ENCODE measurements at regions of chr15 and their contacts with region 1.

Region 1: DNA sequence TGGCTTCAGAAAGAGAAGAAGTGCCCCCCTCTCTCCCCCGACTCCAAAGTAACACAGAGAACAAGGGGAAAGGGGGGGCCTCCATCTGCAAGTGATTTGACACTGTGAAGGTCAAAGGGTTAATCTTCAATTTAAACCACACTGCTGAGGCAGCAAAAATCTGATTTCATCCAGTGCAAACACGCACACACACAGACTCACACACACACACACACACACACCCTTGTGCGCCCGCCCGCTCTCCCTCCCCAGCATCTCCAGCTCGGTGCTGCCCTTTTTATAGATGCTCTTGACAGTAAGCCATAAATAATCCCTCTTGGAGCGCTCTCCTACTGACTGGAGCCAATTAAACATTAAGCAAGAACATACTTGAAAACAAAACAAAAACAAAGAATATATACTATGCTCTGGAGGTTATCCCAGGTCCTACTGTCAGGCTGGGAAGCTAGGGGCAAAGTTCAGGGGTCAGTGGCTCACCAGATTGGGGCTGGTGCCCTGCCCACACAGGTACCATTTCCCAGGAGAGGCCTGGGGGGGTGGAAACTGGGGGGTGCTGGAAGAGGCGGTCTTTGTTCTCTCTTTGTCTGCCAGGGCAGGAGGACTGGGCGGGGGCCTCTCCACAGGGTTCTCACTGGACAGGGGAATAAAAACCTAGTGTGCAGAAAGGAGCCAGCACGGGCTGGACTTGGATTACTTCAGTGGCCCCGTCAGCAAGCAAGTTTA is 16.3 kb downstream of the BMF start:
- DNase-seq: peak; percentile 82 to 88
- H3K4me3 ChIP-seq: no peak overlapping the region
- H3K27ac ChIP-seq: peak overlapping the region; percentile 76 to 92 (median 89)
- H3K4me1 ChIP-seq: peaks cover 76 to 100% of the 10 kb centered on the region in 2 donors
- H3K27me3 ChIP-seq: no peaks in the 10 kb centered on the region
- CTCF ChIP-seq: no peak
- POLR2A ChIP-seq: peak in 1 of 2 donors; percentile 45

Region 2: GRCh38 chr15:40054605-40055545 is 37.5 kb before region 1 on chr15:
- intact Hi-C with region 1: loop called (anchors 5 kb)
- DNase-seq: peak; percentile 71 to 72
- H3K4me3 ChIP-seq: no peak overlapping the region
- H3K27ac ChIP-seq: peak overlapping the region; percentile 16 to 84 (median 72)
- H3K4me1 ChIP-seq: peaks cover 21 to 29% of the 10 kb centered on the region in 2 donors
- H3K27me3 ChIP-seq: no peaks in the 10 kb centered on the region
- CTCF ChIP-seq: no peak
- POLR2A ChIP-seq: no peak

Region 3: DNA sequence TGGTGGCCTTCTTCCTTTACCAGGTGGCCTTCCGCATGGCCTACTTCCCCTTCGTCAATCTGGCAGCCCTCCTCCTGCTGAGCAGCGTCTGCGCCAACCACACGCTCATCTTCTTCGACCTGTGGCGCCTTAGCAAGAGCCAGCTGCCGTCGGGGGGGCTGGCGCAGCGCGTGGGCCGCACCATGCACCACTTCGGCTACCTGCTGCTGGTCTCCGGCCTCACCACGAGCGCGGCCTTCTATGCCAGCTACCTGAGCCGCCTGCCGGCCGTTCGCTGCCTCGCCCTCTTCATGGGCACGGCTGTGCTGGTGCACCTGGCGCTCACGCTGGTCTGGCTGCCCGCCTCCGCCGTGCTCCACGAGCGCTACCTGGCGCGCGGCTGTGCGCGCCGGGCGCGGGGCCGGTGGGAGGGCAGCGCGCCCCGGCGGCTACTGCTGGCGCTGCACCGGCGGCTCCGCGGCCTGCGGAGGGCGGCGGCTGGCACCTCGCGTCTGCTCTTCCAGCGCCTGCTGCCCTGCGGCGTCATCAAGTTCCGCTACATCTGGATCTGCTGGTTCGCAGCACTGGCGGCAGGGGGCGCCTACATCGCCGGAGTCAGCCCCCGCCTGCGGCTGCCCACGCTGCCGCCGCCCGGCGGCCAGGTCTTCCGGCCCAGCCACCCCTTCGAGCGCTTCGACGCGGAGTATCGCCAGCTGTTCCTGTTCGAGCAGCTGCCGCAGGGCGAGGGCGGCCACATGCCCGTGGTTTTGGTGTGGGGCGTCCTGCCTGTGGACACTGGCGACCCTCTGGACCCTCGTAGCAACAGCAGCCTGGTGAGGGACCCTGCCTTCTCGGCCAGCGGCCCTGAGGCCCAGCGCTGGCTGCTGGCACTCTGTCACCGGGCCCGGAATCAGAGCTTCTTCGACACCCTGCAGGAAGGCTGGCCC is 275.5 kb after region 1 on chr15:
- intact Hi-C with region 1: no loop called
- DNase-seq: peak; percentile 93 to 95
- H3K4me3 ChIP-seq: no peak overlapping the region
- H3K27ac ChIP-seq: peak overlapping the region; percentile 60 to 64 (median 62)
- H3K4me1 ChIP-seq: peaks cover 21 to 39% of the 10 kb centered on the region in 2 donors
- H3K27me3 ChIP-seq: no peaks in the 10 kb centered on the region
- CTCF ChIP-seq: peak; percentile 34 to 100 (median 94)
- POLR2A ChIP-seq: peak in 1 of 2 donors; percentile 62

Region 4: DNA sequence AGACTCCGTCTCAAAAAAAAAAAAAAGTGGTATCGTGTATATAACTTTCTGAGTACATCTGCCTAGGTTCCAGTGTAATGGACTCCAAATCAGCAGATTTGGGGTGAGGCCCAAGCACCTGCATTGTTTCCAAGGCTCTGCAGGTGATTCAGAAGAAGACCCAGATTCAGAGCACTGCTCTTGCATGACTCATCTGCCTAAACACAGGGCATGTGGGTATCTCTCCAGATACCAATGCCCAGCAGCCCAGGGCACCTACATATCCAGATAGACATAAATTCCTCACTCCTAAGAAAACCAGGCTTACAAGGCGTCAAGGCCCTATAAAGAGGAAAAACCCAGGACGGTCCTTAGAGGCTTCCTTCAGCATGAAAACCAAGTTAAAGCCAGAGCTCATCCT is 1285.6 kb after region 1 on chr15:
- intact Hi-C with region 1: no loop called
- DNase-seq: no peak
- H3K4me3 ChIP-seq: no peak overlapping the region
- H3K27ac ChIP-seq: no peak overlapping the region
- H3K4me1 ChIP-seq: no peaks in the 10 kb centered on the region
- H3K27me3 ChIP-seq: no peaks in the 10 kb centered on the region
- CTCF ChIP-seq: no peak
- POLR2A ChIP-seq: no peak

Measured in thyroid gland (tissue), 4 donors.